A549 (cell line): ENCODE measurements at regions of chr10 and their contacts with region 1.

Region 1: GRCh38 chr10:42753126-42753506 is 29.5 kb upstream of the BMS1 start:
- DNase-seq: peak; percentile 66 to 75
- ATAC-seq: peak; percentile 75 to 93
- H3K4me3 ChIP-seq: peak overlapping the region; percentile 48
- H3K27ac ChIP-seq: peak overlapping the region; percentile 46 to 50; a peak in 2 of 6 replicates
- H3K4me1 ChIP-seq: 0 out of 3 replicates have a peak, but pooled peaks cover 15% of the 10 kb centered on the region
- CTCF ChIP-seq: peak; percentile 81
- EP300 ChIP-seq: no peak
- POLR2A ChIP-seq: no peak
- RAD21 ChIP-seq: peak; percentile 54 to 63

Region 2: DNA sequence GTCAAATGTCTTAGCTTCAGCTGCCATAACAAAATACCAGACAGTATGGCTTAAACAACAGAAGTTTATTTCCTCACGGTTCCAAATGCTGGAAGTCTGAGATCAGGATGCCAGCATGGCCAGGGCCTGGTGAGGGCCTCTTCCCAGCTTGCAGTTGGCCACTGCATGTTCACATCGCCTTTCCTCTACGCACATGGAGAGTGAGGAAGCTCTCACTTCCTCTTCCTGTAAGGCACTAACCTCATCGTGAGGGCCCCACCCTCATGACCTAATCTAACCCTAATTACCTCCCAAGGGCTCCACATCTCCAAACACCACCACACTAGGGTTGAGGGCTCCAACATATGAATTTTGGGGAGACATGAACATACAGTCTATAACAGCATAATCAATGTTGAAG is 129.2 kb before region 1 on chr10:
- CTCF ChIA-PET with region 1: no interaction called
- POLR2A ChIA-PET with region 1: no interaction called
- DNase-seq: no peak
- ATAC-seq: no peak
- H3K4me3 ChIP-seq: no peak overlapping the region
- H3K27ac ChIP-seq: no peak overlapping the region
- H3K4me1 ChIP-seq: no peaks in the 10 kb centered on the region
- CTCF ChIP-seq: no peak
- EP300 ChIP-seq: no peak
- POLR2A ChIP-seq: no peak
- RAD21 ChIP-seq: no peak

Region 3: GRCh38 chr10:42738679-42739078 is 14.4 kb before region 1 on chr10:
- CTCF ChIA-PET with region 1: interaction called, 14 read pairs
- POLR2A ChIA-PET with region 1: no interaction called
- DNase-seq: no peak
- ATAC-seq: no peak
- H3K4me3 ChIP-seq: no peak overlapping the region
- H3K27ac ChIP-seq: no peak overlapping the region
- H3K4me1 ChIP-seq: no peaks in the 10 kb centered on the region
- CTCF ChIP-seq: no peak
- EP300 ChIP-seq: no peak
- POLR2A ChIP-seq: no peak
- RAD21 ChIP-seq: no peak

Region 4: GRCh38 chr10:42769653-42770052 is 16.5 kb after region 1 on chr10:
- CTCF ChIA-PET with region 1: interaction called, 56 read pairs
- POLR2A ChIA-PET with region 1: no interaction called
- DNase-seq: peak; percentile 31 to 44
- ATAC-seq: peak; percentile 82 to 88; a peak in 5 of 6 replicates
- H3K4me3 ChIP-seq: peak overlapping the region; percentile 36; the same call in 2 of the 3 replicates
- H3K27ac ChIP-seq: peak overlapping the region; percentile 31 to 50; a peak in 2 of 6 replicates
- H3K4me1 ChIP-seq: no peaks in the 10 kb centered on the region; the same call in 2 of the 3 replicates
- CTCF ChIP-seq: no peak
- EP300 ChIP-seq: no peak
- POLR2A ChIP-seq: no peak
- RAD21 ChIP-seq: no peak

Region 5: DNA sequence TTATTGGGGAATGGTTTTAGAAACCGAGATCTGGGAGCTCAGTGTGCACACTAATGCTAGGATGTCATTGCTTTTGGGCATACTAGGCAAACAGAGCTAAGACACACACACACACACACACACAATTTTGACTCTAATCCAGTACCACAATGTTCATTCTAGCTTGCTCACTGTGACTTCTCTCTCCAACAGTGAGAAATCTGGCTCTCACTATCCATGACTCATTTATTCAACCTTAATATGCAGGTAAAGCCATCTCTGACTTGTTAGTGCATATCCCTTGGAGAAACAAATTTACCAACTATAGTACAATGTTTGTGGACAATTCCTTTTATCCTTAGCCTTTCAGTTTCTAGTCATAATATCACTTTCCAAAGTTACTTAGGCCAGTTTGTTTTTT is 23.6 kb after region 1 on chr10:
- CTCF ChIA-PET with region 1: interaction called, 56 read pairs
- POLR2A ChIA-PET with region 1: interaction called, 38 read pairs
- DNase-seq: no peak
- ATAC-seq: no peak
- H3K4me3 ChIP-seq: no peak overlapping the region
- H3K27ac ChIP-seq: no peak overlapping the region
- H3K4me1 ChIP-seq: 0 out of 3 replicates have a peak, but pooled peaks cover 1% of the 10 kb centered on the region
- CTCF ChIP-seq: no peak
- EP300 ChIP-seq: no peak
- POLR2A ChIP-seq: no peak
- RAD21 ChIP-seq: no peak

Region 6: GRCh38 chr10:42782446-42783180 is 29.5 kb after region 1 on chr10 and contains the start of gene BMS1:
- CTCF ChIA-PET with region 1: interaction called, 14 read pairs
- POLR2A ChIA-PET with region 1: interaction called, 38 read pairs
- DNase-seq: peak; percentile 88 to 96
- ATAC-seq: peak; percentile 97
- H3K4me3 ChIP-seq: peak within 1 kb of the TSS; percentile 74
- H3K27ac ChIP-seq: peak within 1 kb of the TSS; percentile 98 to 99
- H3K4me1 ChIP-seq: peaks cover 13% of the 10 kb centered on the region
- CTCF ChIP-seq: no peak
- EP300 ChIP-seq: no peak
- POLR2A ChIP-seq: peak; percentile 89
- RAD21 ChIP-seq: no peak
- polyA plus RNA-seq, gene BMS1: 14.4 and 17.3 TPM in 2 replicates